Heart left ventricle (tissue), 16 donors: ENCODE measurements at regions of chr1 and their contacts with region 1.

Region 1: GRCh38 chr1:168637350-168637991 is 61.1 kb downstream of the XCL1 start:
- DNase-seq: no peak
- ATAC-seq: peak in 3 of 4 donors; percentile 35 to 66 (median 61)
- H3K4me3 ChIP-seq: no peak overlapping the region
- H3K27ac ChIP-seq: peak overlapping the region in 10 of 12 donors; percentile 27 to 82 (median 52)
- H3K4me1 ChIP-seq: peaks cover 0 to 15% (median 3%) of the 10 kb centered on the region in 12 donors
- H3K27me3 ChIP-seq: no peaks in the 10 kb centered on the region
- CTCF ChIP-seq: peak; percentile 35 to 65 (median 54)
- POLR2A ChIP-seq: no peak

Region 2: GRCh38 chr1:168709405-168710305 is 72.2 kb after region 1 on chr1:
- intact Hi-C with region 1: loop called in 1 of 10 experiments (anchors 10 kb)
- DNase-seq: peak in 3 of 5 donors; percentile 24 to 45 (median 27)
- ATAC-seq: peak; percentile 63 to 88 (median 78)
- H3K4me3 ChIP-seq: peak overlapping the region in 2 of 12 donors; percentile 9 to 18
- H3K27ac ChIP-seq: peak overlapping the region in 11 of 12 donors; percentile 18 to 74 (median 60)
- H3K4me1 ChIP-seq: peaks cover 0 to 36% (median 11%) of the 10 kb centered on the region in 12 donors
- H3K27me3 ChIP-seq: no peaks in the 10 kb centered on the region
- CTCF ChIP-seq: no peak
- POLR2A ChIP-seq: no peak

Region 3: DNA sequence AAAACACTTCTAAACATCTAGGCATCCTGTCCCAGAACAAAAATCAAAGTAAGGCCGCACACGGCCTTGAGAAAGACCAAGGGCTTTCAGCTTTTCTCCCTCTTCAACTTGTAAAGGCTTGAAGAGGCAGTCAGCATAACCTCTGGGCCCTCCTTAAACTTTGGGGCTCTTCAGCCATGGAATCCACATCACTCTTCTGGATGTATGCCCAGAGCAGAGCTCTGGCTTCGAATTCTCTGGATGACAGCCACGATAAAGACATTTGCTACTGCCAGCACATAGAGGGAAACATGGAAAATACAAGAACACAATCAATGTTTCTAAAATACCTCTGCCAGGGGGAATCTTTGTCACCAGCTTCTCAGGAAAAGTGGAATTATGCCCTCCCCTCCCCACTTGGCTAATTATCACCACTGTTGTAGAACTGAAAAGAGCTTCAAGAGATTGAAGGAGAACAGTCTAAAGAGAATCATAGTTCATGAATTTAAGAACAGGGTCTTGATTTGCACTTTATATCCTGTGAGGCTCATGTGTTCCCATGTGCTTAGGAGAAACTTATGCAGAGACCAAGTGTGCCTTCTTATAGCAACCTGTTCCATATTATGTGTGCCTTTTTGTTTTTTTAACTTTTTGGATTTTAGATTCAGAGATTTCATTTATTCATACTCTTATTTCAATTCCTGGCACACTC is 130.6 kb after region 1 on chr1:
- intact Hi-C with region 1: loop called in 2 of 10 experiments (anchors 1 to 5 kb)
- DNase-seq: peak in 4 of 5 donors; percentile 44 to 61 (median 57)
- ATAC-seq: peak; percentile 77 to 95 (median 90)
- H3K4me3 ChIP-seq: no peak overlapping the region
- H3K27ac ChIP-seq: peak overlapping the region in 10 of 12 donors; percentile 28 to 63 (median 46)
- H3K4me1 ChIP-seq: peaks cover 0 to 21% (median 8%) of the 10 kb centered on the region in 12 donors
- H3K27me3 ChIP-seq: no peaks in the 10 kb centered on the region
- CTCF ChIP-seq: no peak
- POLR2A ChIP-seq: no peak

Region 4: GRCh38 chr1:168824418-168824817 is 186.9 kb after region 1 on chr1:
- intact Hi-C with region 1: loop called in 1 of 10 experiments (anchors 10 kb)
- DNase-seq: no peak
- ATAC-seq: peak; percentile 12 to 52 (median 40)
- H3K4me3 ChIP-seq: no peak overlapping the region
- H3K27ac ChIP-seq: peak overlapping the region in 5 of 12 donors; percentile 3 to 43 (median 33)
- H3K4me1 ChIP-seq: peaks cover 0 to 17% (median 4%) of the 10 kb centered on the region in 12 donors
- H3K27me3 ChIP-seq: no peaks in the 10 kb centered on the region
- CTCF ChIP-seq: no peak
- POLR2A ChIP-seq: no peak

Region 5: DNA sequence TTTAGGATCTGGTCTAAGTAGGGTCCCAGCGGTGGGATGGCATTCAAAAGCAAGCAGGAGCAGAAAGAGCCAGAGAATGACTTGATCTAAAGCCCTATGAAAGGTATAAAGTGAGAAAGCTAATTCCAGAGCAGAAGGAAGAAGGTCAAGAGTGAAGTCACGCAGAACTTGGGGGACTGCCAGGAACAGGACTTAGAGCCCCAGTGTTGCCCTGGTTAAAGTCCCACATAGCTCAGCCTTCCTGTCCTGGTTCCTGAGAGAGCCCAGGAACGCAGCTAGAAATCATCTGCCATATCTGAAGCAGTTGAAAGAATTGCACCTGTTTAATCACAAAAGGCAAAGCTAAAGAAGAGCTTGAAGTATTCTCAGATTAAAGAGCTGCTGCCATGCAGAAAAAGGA is 308.4 kb after region 1 on chr1:
- intact Hi-C with region 1: no loop called
- DNase-seq: peak in 4 of 5 donors; percentile 57 to 88 (median 73)
- ATAC-seq: peak; percentile 86 to 99 (median 95)
- H3K4me3 ChIP-seq: no peak overlapping the region
- H3K27ac ChIP-seq: peak overlapping the region in 10 of 12 donors; percentile 2 to 62 (median 50)
- H3K4me1 ChIP-seq: peaks cover 0 to 13% (median 11%) of the 10 kb centered on the region in 12 donors
- H3K27me3 ChIP-seq: no peaks in the 10 kb centered on the region
- CTCF ChIP-seq: no peak
- POLR2A ChIP-seq: no peak

Region 6: GRCh38 chr1:169133801-169134502 is 496.5 kb after region 1 on chr1:
- intact Hi-C with region 1: loop called in 2 of 10 experiments (anchors 5 to 10 kb)
- DNase-seq: no peak
- ATAC-seq: peak in 2 of 4 donors; percentile 40 to 47
- H3K4me3 ChIP-seq: no peak overlapping the region
- H3K27ac ChIP-seq: peak overlapping the region in 5 of 12 donors; percentile 10 to 34 (median 15)
- H3K4me1 ChIP-seq: peaks cover 0 to 23% (median 8%) of the 10 kb centered on the region in 12 donors
- H3K27me3 ChIP-seq: no peaks in the 10 kb centered on the region
- CTCF ChIP-seq: peak in 9 of 12 donors; percentile 10 to 64 (median 42)
- POLR2A ChIP-seq: no peak

Region 7: GRCh38 chr1:169193191-169193850 is 555.9 kb after region 1 on chr1:
- intact Hi-C with region 1: loop called in 2 of 10 experiments (anchors 2 kb)
- DNase-seq: peak in 4 of 5 donors; percentile 18 to 53 (median 30)
- ATAC-seq: peak; percentile 93 to 96 (median 94)
- H3K4me3 ChIP-seq: no peak overlapping the region
- H3K27ac ChIP-seq: peak overlapping the region in 4 of 12 donors; percentile 15 to 53 (median 24)
- H3K4me1 ChIP-seq: peaks cover 0 to 12% (median 0%) of the 10 kb centered on the region in 12 donors
- H3K27me3 ChIP-seq: no peaks in the 10 kb centered on the region
- CTCF ChIP-seq: peak in 8 of 12 donors; percentile 14 to 58 (median 41)
- POLR2A ChIP-seq: no peak